GM12878 (cell line): ENCODE measurements at regions of chr2 and their contacts with region 1.

Region 1: DNA sequence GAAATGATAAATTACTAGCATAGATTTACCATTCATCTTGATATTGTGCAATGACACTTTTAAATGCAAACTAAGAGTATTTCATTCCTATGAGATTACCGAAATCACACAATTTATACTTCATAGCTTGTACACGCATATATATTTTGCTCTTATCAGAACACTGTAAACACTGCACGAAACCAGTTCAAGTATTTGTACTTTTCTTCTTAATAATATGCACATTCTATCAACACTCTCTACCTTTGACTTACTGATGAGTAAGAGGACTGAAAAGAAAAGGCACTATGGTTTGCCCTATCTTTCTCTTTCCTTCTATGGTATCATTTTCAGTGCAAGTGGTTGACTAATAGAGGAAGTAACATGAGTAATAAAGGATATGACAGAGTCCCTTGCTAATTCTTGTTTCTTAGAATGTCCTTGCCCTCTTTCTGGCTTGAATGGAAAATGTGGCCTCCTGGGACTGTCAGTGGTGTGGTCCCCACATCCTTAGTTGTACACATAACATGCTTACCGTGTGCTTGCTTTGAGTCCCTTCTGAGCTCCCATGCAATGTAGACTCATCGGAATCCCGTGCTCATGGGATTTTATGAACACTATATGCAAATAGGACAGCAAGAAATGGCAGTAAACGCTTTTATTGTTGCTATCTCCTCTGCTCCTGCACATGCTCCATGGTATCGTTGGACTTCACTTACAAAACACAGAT is 363.5 kb upstream of the TNP1 start:
- DNase-seq: peak; percentile 93
- ATAC-seq: peak; percentile 81
- H3K4me3 ChIP-seq: 0 out of 2 replicates have a peak overlapping the region, but pooled peaks have one; percentile 23
- H3K27ac ChIP-seq: peak overlapping the region; percentile 92
- H3K4me1 ChIP-seq: peaks cover 52% of the 10 kb centered on the region
- H3K27me3 ChIP-seq: no peaks in the 10 kb centered on the region
- CTCF ChIP-seq: no peak
- EP300 ChIP-seq: peak; percentile 90 to 96
- POLR2A ChIP-seq: no peak
- RAD21 ChIP-seq: 0 out of 2 replicates have a peak, but pooled peaks have one; percentile 19

Region 2: GRCh38 chr2:216698895-216699294 is 524.5 kb before region 1 on chr2:
- CTCF ChIA-PET with region 1: no interaction called
- POLR2A ChIA-PET with region 1: no interaction called
- RAD21 ChIA-PET with region 1: no interaction called
- SMC1A ChIA-PET with region 1: no interaction called
- in situ Hi-C with region 1: no loop called
- intact Hi-C with region 1: loop called (anchors 10 kb)
- DNase-seq: no peak
- ATAC-seq: peak; percentile 88
- H3K4me3 ChIP-seq: no peak overlapping the region
- H3K27ac ChIP-seq: no peak overlapping the region
- H3K4me1 ChIP-seq: no peaks in the 10 kb centered on the region
- H3K27me3 ChIP-seq: peaks cover 2 to 12% of the 10 kb centered on the region in 2 experiments; a peak in 3 of 4 replicates
- CTCF ChIP-seq: peak; percentile 60 to 78 (median 66); a peak in 5 of 6 replicates
- EP300 ChIP-seq: no peak
- POLR2A ChIP-seq: no peak
- RAD21 ChIP-seq: peak; percentile 75

Region 3: DNA sequence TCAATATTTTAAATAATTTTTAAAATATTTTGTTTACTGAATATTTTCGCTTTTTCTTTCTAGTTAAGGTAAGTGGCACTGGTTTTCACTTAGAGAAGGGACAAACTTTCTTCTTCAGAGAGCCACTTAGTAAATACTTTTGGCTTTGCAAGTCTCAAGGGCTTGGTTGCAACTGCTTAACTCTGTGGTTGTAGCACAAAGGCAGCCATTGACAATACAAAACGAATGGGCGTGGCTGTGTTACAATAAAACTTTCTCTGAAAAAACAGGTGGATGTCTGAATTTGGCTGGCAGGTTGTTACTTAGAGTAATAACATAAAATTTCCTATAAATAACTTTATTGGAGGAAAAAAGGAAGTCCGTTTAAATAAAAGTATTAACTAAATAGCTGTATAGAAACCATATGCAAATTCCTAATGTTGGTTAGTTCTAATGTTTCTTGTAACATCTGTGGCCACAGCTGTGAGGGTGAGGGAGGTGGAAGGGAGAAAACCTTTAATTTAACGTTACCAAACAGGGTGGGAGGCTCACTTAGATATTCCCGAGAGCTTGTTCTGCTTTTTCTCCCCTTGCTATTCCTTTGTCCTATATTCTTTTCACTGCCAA is 301.1 kb before region 1 on chr2:
- CTCF ChIA-PET with region 1: no interaction called
- POLR2A ChIA-PET with region 1: no interaction called
- RAD21 ChIA-PET with region 1: no interaction called
- SMC1A ChIA-PET with region 1: no interaction called
- in situ Hi-C with region 1: no loop called
- intact Hi-C with region 1: loop called (anchors 5 kb)
- DNase-seq: no peak
- ATAC-seq: peak; percentile 44
- H3K4me3 ChIP-seq: no peak overlapping the region
- H3K27ac ChIP-seq: no peak overlapping the region
- H3K4me1 ChIP-seq: 0 out of 2 replicates have a peak, but pooled peaks cover 3% of the 10 kb centered on the region
- H3K27me3 ChIP-seq: no peaks in the 10 kb centered on the region; a peak in 2 of 4 replicates
- CTCF ChIP-seq: no peak
- EP300 ChIP-seq: no peak
- POLR2A ChIP-seq: no peak
- RAD21 ChIP-seq: no peak

Region 4: GRCh38 chr2:217090024-217090473 is 133.3 kb before region 1 on chr2:
- CTCF ChIA-PET with region 1: interaction called, 3 read pairs
- POLR2A ChIA-PET with region 1: no interaction called
- RAD21 ChIA-PET with region 1: no interaction called
- SMC1A ChIA-PET with region 1: interaction called, 4 read pairs
- in situ Hi-C with region 1: loop called (anchors 5 kb)
- intact Hi-C with region 1: loop called (anchors 1 kb)
- DNase-seq: peak; percentile 82
- ATAC-seq: peak; percentile 80
- H3K4me3 ChIP-seq: 0 out of 2 replicates have a peak overlapping the region, but pooled peaks have one; percentile 33
- H3K27ac ChIP-seq: peak overlapping the region; percentile 58; the same call in 1 of the 2 replicates
- H3K4me1 ChIP-seq: peaks cover 28% of the 10 kb centered on the region
- H3K27me3 ChIP-seq: no peaks in the 10 kb centered on the region
- CTCF ChIP-seq: no peak
- EP300 ChIP-seq: peak in 1 of 2 experiments; percentile 89; a peak in 1 of 4 replicates
- POLR2A ChIP-seq: no peak
- RAD21 ChIP-seq: no peak

Region 5: GRCh38 chr2:217360781-217361482 is 137.6 kb after region 1 on chr2:
- CTCF ChIA-PET with region 1: no interaction called
- POLR2A ChIA-PET with region 1: no interaction called
- RAD21 ChIA-PET with region 1: no interaction called
- SMC1A ChIA-PET with region 1: no interaction called
- in situ Hi-C with region 1: no loop called
- intact Hi-C with region 1: no loop called
- DNase-seq: no peak
- ATAC-seq: no peak
- H3K4me3 ChIP-seq: no peak overlapping the region
- H3K27ac ChIP-seq: no peak overlapping the region
- H3K4me1 ChIP-seq: no peaks in the 10 kb centered on the region
- H3K27me3 ChIP-seq: 0 out of 4 replicates have a peak, but pooled peaks cover 0 to 2% of the 10 kb centered on the region in 2 experiments
- CTCF ChIP-seq: no peak
- EP300 ChIP-seq: no peak
- POLR2A ChIP-seq: no peak
- RAD21 ChIP-seq: no peak

Region 6: GRCh38 chr2:217415316-217415715 is 191.9 kb after region 1 on chr2:
- CTCF ChIA-PET with region 1: no interaction called
- POLR2A ChIA-PET with region 1: no interaction called
- RAD21 ChIA-PET with region 1: no interaction called
- SMC1A ChIA-PET with region 1: no interaction called
- in situ Hi-C with region 1: no loop called
- intact Hi-C with region 1: loop called (anchors 2 kb)
- DNase-seq: peak; percentile 31
- ATAC-seq: peak; percentile 88
- H3K4me3 ChIP-seq: no peak overlapping the region
- H3K27ac ChIP-seq: no peak overlapping the region
- H3K4me1 ChIP-seq: peaks cover 9% of the 10 kb centered on the region
- H3K27me3 ChIP-seq: no peaks in the 10 kb centered on the region
- CTCF ChIP-seq: no peak
- EP300 ChIP-seq: peak in 1 of 2 experiments; percentile 50; a peak in 1 of 4 replicates
- POLR2A ChIP-seq: no peak
- RAD21 ChIP-seq: no peak

Region 7: DNA sequence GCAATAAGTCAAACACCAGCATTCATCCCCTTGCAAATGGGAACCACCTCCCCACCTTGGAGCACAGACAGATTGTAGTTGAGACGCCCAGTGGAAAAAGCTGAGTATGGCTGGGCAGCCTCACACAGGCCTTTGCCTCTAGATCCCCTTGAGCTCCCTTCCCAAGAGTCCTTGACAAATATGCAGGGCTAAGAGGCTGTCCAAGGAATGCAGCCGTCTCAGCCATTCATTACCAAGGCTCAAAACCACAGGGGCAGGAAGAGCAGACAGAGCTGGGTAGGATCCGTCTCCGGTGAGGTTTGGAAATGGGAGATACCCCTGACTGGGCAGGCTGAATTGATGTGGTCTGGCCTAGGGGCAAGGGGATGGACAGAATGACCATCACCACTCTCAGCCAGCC is 222.3 kb after region 1 on chr2:
- CTCF ChIA-PET with region 1: no interaction called
- POLR2A ChIA-PET with region 1: no interaction called
- RAD21 ChIA-PET with region 1: no interaction called
- SMC1A ChIA-PET with region 1: no interaction called
- in situ Hi-C with region 1: no loop called
- intact Hi-C with region 1: loop called (anchors 2 kb)
- DNase-seq: no peak
- ATAC-seq: no peak
- H3K4me3 ChIP-seq: no peak overlapping the region
- H3K27ac ChIP-seq: no peak overlapping the region
- H3K4me1 ChIP-seq: peaks cover 8% of the 10 kb centered on the region
- H3K27me3 ChIP-seq: no peaks in the 10 kb centered on the region
- CTCF ChIP-seq: no peak
- EP300 ChIP-seq: no peak
- POLR2A ChIP-seq: no peak
- RAD21 ChIP-seq: no peak